Activated CD8-positive, alpha-beta memory T cell treated with anti-CD3 and anti-CD28 coated beads, Interleukin-2, amount 10 ng/mL, durations not matched to agents 7 days and 5 days (primary cell): ENCODE measurements at regions of chrX and their contacts with region 1.

Region 1: DNA sequence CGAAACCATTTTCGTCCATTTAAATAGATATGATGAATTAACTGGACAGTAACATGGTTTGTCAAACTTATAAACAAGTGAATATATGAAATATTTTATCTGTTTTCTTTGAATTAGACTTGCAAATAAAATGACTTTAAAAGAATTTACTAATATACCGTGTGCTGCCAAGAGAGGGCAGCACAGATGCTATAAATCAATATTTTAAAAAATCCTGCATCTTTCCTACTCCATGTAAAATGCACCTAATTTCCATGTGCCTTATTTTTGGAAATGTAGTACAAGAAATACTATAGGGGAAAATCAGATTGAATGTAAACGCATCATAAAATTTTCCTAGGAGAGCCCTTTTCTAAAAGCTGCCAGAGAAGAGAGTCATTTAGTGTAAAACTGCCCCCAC is 62.2 kb downstream of the PRKX start:
- DNase-seq: no peak
- ATAC-seq: no peak
- H3K4me3 Mint-ChIP-seq: no peak overlapping the region
- H3K27ac Mint-ChIP-seq: no peak overlapping the region
- H3K4me1 Mint-ChIP-seq: peaks cover 2% of the 10 kb centered on the region
- H3K27me3 Mint-ChIP-seq: no peaks in the 10 kb centered on the region

Region 2: GRCh38 chrX:3771766-3772165 is 120.5 kb after region 1 on chrX:
- CTCF ChIA-PET with region 1: no interaction called
- DNase-seq: no peak
- ATAC-seq: no peak
- H3K4me3 Mint-ChIP-seq: no peak overlapping the region
- H3K27ac Mint-ChIP-seq: no peak overlapping the region
- H3K4me1 Mint-ChIP-seq: peaks cover 1% of the 10 kb centered on the region
- H3K27me3 Mint-ChIP-seq: peaks cover 7% of the 10 kb centered on the region

Region 3: GRCh38 chrX:3811331-3812311 is 160.3 kb after region 1 on chrX:
- CTCF ChIA-PET with region 1: interaction called, 15 read pairs
- DNase-seq: peak; percentile 72
- ATAC-seq: no peak
- H3K4me3 Mint-ChIP-seq: peak overlapping the region; percentile 50
- H3K27ac Mint-ChIP-seq: peak overlapping the region; percentile 66
- H3K4me1 Mint-ChIP-seq: peaks cover 22% of the 10 kb centered on the region
- H3K27me3 Mint-ChIP-seq: peaks cover 34% of the 10 kb centered on the region